Activated CD4-positive, alpha-beta memory T cell treated with anti-CD3 and anti-CD28 coated beads for 36 hours (primary cell): ENCODE measurements at regions of chr9 and their contacts with region 1.

Region 1: DNA sequence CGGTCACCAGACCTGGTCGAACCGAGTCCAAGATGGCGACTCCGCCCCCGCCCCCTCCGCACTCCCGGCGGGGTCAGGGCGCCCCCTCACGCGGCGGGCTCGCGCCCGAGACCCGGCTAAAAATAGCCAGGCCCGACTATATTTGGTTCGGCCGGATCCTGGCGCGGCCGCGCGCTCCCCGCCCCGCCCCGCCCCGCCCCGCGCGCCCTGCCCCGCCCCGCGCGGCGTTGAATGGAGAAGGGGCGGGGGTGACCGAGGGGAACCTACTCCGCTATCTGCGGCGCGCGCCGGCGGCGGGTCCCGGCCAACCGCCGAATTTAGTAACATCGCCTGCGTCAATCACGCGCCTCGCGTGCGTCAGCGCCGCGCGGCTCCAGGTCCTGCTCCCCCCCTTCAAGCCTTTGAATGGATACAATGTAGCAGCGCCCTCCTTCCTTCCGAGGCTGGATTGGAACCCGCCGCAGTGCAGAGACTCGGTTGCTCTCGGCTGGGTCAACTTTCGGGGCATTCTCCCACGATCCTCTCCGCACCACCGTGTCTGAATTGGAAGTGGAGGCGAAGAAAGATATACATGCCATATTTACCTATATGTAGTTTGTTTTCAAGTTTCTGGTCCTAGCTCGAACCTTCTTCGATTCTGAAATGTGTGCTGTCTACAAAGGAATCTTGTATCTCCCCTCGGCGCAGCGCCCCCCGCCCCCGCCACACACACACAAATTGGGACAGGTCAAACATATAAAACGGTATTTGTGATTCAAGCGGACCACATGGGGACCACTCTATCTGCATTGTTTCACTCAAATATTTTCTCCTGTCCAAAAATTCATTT is 1.6 kb upstream of the NR4A3 start:
- DNase-seq: peak; percentile 92
- H3K4me3 Mint-ChIP-seq: peak overlapping the region; percentile 86
- H3K27ac Mint-ChIP-seq: peak overlapping the region; percentile 87
- H3K4me1 Mint-ChIP-seq: peaks cover 54% of the 10 kb centered on the region
- H3K27me3 Mint-ChIP-seq: peaks cover 17% of the 10 kb centered on the region

Region 2: GRCh38 chr9:99184475-99185347 is 635.4 kb before region 1 on chr9:
- CTCF ChIA-PET with region 1: interaction called, 5 read pairs
- POLR2A ChIA-PET with region 1: no interaction called
- intact Hi-C with region 1: loop called (anchors 5 kb)
- DNase-seq: peak; percentile 86
- H3K4me3 Mint-ChIP-seq: no peak overlapping the region
- H3K27ac Mint-ChIP-seq: no peak overlapping the region
- H3K4me1 Mint-ChIP-seq: peaks cover 33% of the 10 kb centered on the region
- H3K27me3 Mint-ChIP-seq: no peaks in the 10 kb centered on the region

Region 3: DNA sequence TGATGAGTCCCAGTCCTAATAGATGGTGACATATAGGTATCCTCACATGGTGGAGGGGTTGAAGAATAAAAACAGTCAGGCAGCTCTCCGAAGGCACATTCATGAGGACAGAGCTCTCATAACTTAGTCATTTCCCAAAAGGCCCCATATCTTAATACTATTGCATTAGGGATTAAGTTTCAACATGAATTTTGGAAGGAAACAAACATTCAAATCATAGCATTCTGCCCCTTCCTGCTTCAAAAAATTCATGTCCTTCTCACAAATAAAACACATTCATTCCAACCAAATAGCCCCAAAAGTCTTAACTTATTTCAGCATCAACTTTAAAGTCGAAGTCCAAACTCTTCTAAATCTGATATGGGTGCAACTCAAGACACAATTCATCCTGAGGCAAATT is 275.5 kb before region 1 on chr9:
- CTCF ChIA-PET with region 1: no interaction called
- POLR2A ChIA-PET with region 1: no interaction called
- intact Hi-C with region 1: no loop called
- DNase-seq: no peak
- H3K4me3 Mint-ChIP-seq: no peak overlapping the region
- H3K27ac Mint-ChIP-seq: no peak overlapping the region
- H3K4me1 Mint-ChIP-seq: no peaks in the 10 kb centered on the region
- H3K27me3 Mint-ChIP-seq: peaks cover 2% of the 10 kb centered on the region

Region 4: GRCh38 chr9:99634186-99634585 is 185.9 kb before region 1 on chr9:
- CTCF ChIA-PET with region 1: no interaction called
- POLR2A ChIA-PET with region 1: no interaction called
- intact Hi-C with region 1: no loop called
- DNase-seq: no peak
- H3K4me3 Mint-ChIP-seq: no peak overlapping the region
- H3K27ac Mint-ChIP-seq: no peak overlapping the region
- H3K4me1 Mint-ChIP-seq: no peaks in the 10 kb centered on the region
- H3K27me3 Mint-ChIP-seq: peaks cover 5% of the 10 kb centered on the region

Region 5: GRCh38 chr9:99762470-99762869 is 57.6 kb before region 1 on chr9:
- CTCF ChIA-PET with region 1: no interaction called
- POLR2A ChIA-PET with region 1: no interaction called
- intact Hi-C with region 1: no loop called
- DNase-seq: no peak
- H3K4me3 Mint-ChIP-seq: no peak overlapping the region
- H3K27ac Mint-ChIP-seq: no peak overlapping the region
- H3K4me1 Mint-ChIP-seq: no peaks in the 10 kb centered on the region
- H3K27me3 Mint-ChIP-seq: peaks cover 8% of the 10 kb centered on the region

Region 6: GRCh38 chr9:99807276-99807852 is 12.7 kb before region 1 on chr9:
- CTCF ChIA-PET with region 1: interaction called, 13 read pairs
- POLR2A ChIA-PET with region 1: interaction called, 6 read pairs
- intact Hi-C with region 1: loop called (anchors 1 kb)
- DNase-seq: peak; percentile 69
- H3K4me3 Mint-ChIP-seq: no peak overlapping the region
- H3K27ac Mint-ChIP-seq: no peak overlapping the region
- H3K4me1 Mint-ChIP-seq: peaks cover 25% of the 10 kb centered on the region
- H3K27me3 Mint-ChIP-seq: peaks cover 6% of the 10 kb centered on the region

Region 7: DNA sequence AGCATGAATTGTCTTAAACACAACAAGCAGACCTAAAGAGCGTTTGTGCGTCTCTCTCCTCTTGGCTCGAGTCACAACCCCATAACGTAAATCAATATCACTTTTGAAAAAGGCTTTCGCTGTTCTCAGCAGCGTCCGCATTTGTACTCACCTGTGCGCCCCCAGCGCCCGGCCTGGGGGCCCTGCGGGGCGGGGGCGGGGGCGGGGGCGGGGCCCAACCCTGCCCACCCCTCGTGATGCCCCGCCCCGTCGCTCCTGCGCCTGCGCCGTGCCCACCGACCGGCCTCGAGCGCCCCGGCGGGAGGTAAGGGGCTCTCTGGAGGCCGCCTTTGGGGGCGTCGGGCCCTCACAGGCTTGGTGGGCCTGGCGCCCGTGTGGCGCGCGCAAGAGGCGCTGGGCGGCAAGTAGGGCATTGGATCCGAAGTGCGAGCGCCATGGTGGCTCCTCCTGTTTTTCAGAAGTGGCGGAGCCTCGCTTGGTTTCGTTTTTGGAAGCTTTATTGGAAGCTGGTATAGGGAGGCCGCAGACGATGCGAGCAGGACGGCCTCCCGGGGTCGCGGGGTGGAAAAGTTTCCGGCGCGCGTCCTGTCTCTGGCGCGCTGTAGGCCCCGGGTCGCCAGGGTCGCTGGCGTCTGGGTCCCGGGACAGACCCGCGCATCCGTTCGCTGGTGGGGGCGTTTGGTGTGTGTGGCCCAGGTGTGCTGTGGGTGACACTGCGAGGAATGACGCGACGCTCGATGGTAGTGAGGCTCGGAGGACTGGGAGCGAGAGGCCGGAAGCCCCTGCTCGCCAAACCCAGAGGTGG is 86.5 kb after region 1 on chr9 and contains the start of gene STX17:
- CTCF ChIA-PET with region 1: interaction called, 7 read pairs
- POLR2A ChIA-PET with region 1: interaction called, 4 read pairs
- intact Hi-C with region 1: loop called (anchors 1 kb)
- DNase-seq: peak; percentile 82
- H3K4me3 Mint-ChIP-seq: peak within 1 kb of the TSS; percentile 96
- H3K27ac Mint-ChIP-seq: peak within 1 kb of the TSS; percentile 95
- H3K4me1 Mint-ChIP-seq: peaks cover 20% of the 10 kb centered on the region
- H3K27me3 Mint-ChIP-seq: peaks cover 3% of the 10 kb centered on the region
- total RNA-seq, gene STX17: 30.6 to 36.1 TPM

Region 8: DNA sequence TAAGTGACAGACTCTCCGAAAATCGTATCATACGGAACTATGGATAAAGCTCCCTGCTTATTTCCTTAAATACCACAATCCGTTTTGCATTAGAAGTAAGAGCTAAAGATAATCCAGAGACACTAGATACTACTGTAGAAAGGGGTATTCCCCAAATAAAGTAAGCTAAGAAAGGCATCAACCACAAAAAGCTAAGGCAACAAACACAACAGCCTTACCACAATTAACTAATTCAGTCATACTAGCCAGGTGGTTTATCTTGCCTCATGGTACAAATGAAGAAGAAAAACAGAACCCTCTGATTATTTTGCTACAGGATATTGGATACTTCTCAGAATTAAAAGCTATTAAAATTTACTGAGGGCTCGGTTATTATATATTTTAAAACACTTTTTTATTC is 264.7 kb after region 1 on chr9:
- CTCF ChIA-PET with region 1: no interaction called
- POLR2A ChIA-PET with region 1: no interaction called
- intact Hi-C with region 1: loop called (anchors 2 kb)
- DNase-seq: no peak
- H3K4me3 Mint-ChIP-seq: no peak overlapping the region
- H3K27ac Mint-ChIP-seq: no peak overlapping the region
- H3K4me1 Mint-ChIP-seq: peaks cover 70% of the 10 kb centered on the region
- H3K27me3 Mint-ChIP-seq: no peaks in the 10 kb centered on the region

Region 9: DNA sequence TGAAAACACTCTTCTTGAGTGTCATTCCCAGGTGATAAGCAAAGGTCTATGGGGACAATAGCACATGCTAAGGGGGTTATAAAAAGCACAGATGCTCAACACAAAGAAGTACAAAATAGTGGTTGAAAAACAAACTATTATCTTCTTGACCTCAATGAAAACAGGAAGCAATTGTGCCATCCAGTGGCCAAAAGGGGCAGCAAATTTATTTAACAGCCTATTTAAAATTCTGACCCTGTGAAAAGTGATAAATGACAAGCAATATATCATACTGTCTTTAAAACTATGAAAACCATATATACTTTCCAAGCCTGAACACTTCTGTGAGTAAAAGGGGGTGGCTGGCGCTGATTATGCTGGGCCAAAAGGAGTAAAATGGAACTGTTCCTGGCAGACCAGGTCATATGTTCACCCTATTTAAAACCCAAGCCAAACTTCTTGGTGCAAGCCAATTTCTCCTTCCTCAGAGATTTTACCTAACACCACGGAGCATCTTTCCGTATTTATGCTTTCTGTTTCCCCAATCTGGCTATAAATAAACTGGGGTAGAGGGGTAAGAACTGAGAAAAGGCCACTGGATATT is 503.0 kb after region 1 on chr9:
- CTCF ChIA-PET with region 1: no interaction called
- POLR2A ChIA-PET with region 1: no interaction called
- intact Hi-C with region 1: loop called (anchors 10 kb)
- DNase-seq: peak; percentile 24
- H3K4me3 Mint-ChIP-seq: no peak overlapping the region
- H3K27ac Mint-ChIP-seq: no peak overlapping the region
- H3K4me1 Mint-ChIP-seq: peaks cover 10% of the 10 kb centered on the region
- H3K27me3 Mint-ChIP-seq: no peaks in the 10 kb centered on the region

Region 10: GRCh38 chr9:100598641-100599145 is 778.6 kb after region 1 on chr9:
- CTCF ChIA-PET with region 1: no interaction called
- POLR2A ChIA-PET with region 1: interaction called, 3 read pairs
- intact Hi-C with region 1: loop called (anchors 10 kb)
- DNase-seq: peak; percentile 86
- H3K4me3 Mint-ChIP-seq: peak overlapping the region; percentile 68
- H3K27ac Mint-ChIP-seq: no peak overlapping the region
- H3K4me1 Mint-ChIP-seq: peaks cover 20% of the 10 kb centered on the region
- H3K27me3 Mint-ChIP-seq: no peaks in the 10 kb centered on the region